Caco-2 (cell line): ENCODE measurements at regions of chr10 and their contacts with region 1.

Region 1: DNA sequence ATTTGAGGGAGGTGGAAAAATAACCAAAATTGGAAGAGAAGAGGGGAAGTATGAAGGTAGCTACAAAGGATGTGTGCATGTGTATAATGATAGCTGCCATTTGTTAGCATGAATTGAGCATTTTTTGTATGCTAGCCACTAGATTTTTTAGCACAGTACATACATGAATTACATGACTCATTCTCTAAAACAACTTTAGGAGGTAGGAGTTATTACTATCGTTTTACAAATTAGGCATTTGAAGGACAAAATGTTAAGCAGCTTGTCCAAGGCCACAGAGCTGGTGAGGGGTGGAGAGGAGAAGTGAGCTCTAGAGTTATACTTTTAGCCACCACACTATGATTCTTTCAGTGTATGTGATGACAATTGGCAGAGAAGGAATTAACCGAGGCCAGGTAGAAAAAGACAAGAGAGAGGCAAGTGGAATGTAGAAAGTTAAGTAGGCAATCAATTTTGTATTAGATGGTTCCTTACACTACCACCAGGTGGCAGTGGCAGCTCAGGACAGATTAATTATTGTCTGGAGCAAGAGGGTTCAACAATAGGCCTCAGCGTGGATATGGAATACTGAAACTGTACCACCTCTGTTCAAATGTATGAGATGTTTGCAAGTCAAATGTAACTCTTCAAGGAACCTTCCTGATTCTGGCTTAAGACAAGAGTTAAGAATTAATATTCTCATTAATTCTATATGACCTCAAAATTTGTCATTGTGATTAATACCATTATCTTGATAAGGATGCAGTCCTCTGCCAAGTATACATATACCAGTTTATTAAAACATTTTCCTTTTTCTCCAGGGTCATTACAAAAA is 128.0 kb downstream of the MBL2 start:
- DNase-seq: peak; percentile 63 to 84
- H3K4me3 ChIP-seq: no peak overlapping the region
- H3K4me3 Mint-ChIP-seq: no peak overlapping the region
- H3K27ac Mint-ChIP-seq: no peak overlapping the region
- H3K4me1 ChIP-seq: peaks cover 25% of the 10 kb centered on the region
- H3K4me1 Mint-ChIP-seq: peaks cover 51% of the 10 kb centered on the region
- H3K27me3 ChIP-seq: no peaks in the 10 kb centered on the region
- H3K27me3 Mint-ChIP-seq: no peaks in the 10 kb centered on the region
- CTCF ChIP-seq: peak; percentile 89 to 98

Region 2: GRCh38 chr10:52621635-52622079 is 22.9 kb before region 1 on chr10:
- CTCF ChIA-PET with region 1: no interaction called
- POLR2A ChIA-PET with region 1: no interaction called
- intact Hi-C with region 1: no loop called
- DNase-seq: no peak
- H3K4me3 ChIP-seq: no peak overlapping the region
- H3K4me3 Mint-ChIP-seq: no peak overlapping the region
- H3K27ac Mint-ChIP-seq: no peak overlapping the region
- H3K4me1 ChIP-seq: no peaks in the 10 kb centered on the region
- H3K4me1 Mint-ChIP-seq: no peaks in the 10 kb centered on the region
- H3K27me3 ChIP-seq: no peaks in the 10 kb centered on the region
- H3K27me3 Mint-ChIP-seq: no peaks in the 10 kb centered on the region
- CTCF ChIP-seq: no peak

Region 3: GRCh38 chr10:52682784-52683183 is 38.2 kb after region 1 on chr10:
- CTCF ChIA-PET with region 1: no interaction called
- POLR2A ChIA-PET with region 1: no interaction called
- intact Hi-C with region 1: loop called (anchors 1 kb)
- DNase-seq: peak; percentile 52 to 76
- H3K4me3 ChIP-seq: no peak overlapping the region
- H3K4me3 Mint-ChIP-seq: peak overlapping the region; percentile 6
- H3K27ac Mint-ChIP-seq: no peak overlapping the region
- H3K4me1 ChIP-seq: peaks cover 43% of the 10 kb centered on the region
- H3K4me1 Mint-ChIP-seq: peaks cover 29% of the 10 kb centered on the region
- H3K27me3 ChIP-seq: no peaks in the 10 kb centered on the region
- H3K27me3 Mint-ChIP-seq: no peaks in the 10 kb centered on the region
- CTCF ChIP-seq: no peak

Region 4: GRCh38 chr10:52729271-52730104 is 84.9 kb after region 1 on chr10:
- CTCF ChIA-PET with region 1: interaction called, 33 read pairs
- POLR2A ChIA-PET with region 1: no interaction called
- intact Hi-C with region 1: loop called (anchors 1 kb)
- DNase-seq: peak in 1 of 2 experiments; percentile 49
- H3K4me3 ChIP-seq: no peak overlapping the region
- H3K4me3 Mint-ChIP-seq: no peak overlapping the region
- H3K27ac Mint-ChIP-seq: no peak overlapping the region
- H3K4me1 ChIP-seq: peaks cover 8% of the 10 kb centered on the region; the same call in 1 of the 2 replicates
- H3K4me1 Mint-ChIP-seq: no peaks in the 10 kb centered on the region
- H3K27me3 ChIP-seq: no peaks in the 10 kb centered on the region
- H3K27me3 Mint-ChIP-seq: peaks cover 3% of the 10 kb centered on the region
- CTCF ChIP-seq: peak; percentile 73 to 89

Region 5: GRCh38 chr10:52779541-52780390 is 135.2 kb after region 1 on chr10:
- CTCF ChIA-PET with region 1: interaction called, 3 read pairs
- POLR2A ChIA-PET with region 1: no interaction called
- intact Hi-C with region 1: loop called (anchors 1 kb)
- DNase-seq: peak; percentile 89 to 96
- H3K4me3 ChIP-seq: no peak overlapping the region
- H3K4me3 Mint-ChIP-seq: no peak overlapping the region
- H3K27ac Mint-ChIP-seq: peak overlapping the region; percentile 5
- H3K4me1 ChIP-seq: peaks cover 12% of the 10 kb centered on the region
- H3K4me1 Mint-ChIP-seq: peaks cover 27% of the 10 kb centered on the region
- H3K27me3 ChIP-seq: no peaks in the 10 kb centered on the region
- H3K27me3 Mint-ChIP-seq: no peaks in the 10 kb centered on the region
- CTCF ChIP-seq: peak; percentile 100